ENCODE measurements at regions of chr16 and their contacts with region 1.

Region 1: DNA sequence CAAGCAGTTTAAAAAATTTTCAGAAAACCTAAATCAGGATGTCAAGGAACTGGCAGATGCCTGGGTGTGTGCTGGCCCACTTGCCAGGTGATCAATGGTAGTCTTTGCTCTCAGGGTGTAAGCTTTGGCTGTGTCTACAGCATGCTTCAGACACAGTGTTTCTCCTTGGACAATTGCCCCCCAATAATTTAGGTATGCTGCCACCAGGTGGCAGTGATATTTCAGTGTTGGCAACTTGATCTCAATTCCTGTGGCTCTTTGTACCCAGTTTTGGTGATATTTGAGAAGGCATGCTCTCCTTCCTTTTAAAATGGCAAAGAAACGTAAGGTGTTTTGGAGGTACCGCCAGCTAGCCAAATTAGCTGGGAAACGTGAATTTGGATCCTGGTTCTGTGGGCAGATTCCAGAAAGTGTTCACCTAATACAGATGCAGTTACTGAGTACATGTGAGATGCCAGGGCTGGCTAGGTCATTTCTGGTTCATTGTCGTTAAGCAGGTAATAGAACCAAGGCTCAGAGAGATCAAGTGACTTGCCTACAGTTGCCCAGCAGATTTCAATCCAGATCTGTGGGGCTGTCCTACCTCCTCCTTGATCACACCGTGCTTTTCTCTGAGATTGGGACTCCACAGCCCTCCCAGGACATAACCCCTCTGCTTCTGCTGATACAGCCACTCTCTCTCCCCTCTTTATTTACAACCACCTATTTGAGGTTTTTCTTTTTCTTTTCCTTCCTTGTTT is 155.6 kb upstream of the PLCG2 start:
- DNase-seq: peak; percentile 65 to 73
- ATAC-seq: peak; percentile 35 to 59; a peak in 3 of 6 replicates
- H3K4me3 ChIP-seq: no peak overlapping the region
- H3K27ac ChIP-seq: peak overlapping the region; percentile 70 to 76
- H3K4me1 ChIP-seq: peaks cover 41% of the 10 kb centered on the region
- CTCF ChIP-seq: peak; percentile 74
- EP300 ChIP-seq: no peak
- POLR2A ChIP-seq: no peak
- RAD21 ChIP-seq: peak; percentile 78 to 83

Region 2: GRCh38 chr16:81170824-81171223 is 452.7 kb before region 1 on chr16:
- CTCF ChIA-PET with region 1: no interaction called
- POLR2A ChIA-PET with region 1: no interaction called
- DNase-seq: no peak
- ATAC-seq: no peak
- H3K4me3 ChIP-seq: no peak overlapping the region
- H3K27ac ChIP-seq: no peak overlapping the region
- H3K4me1 ChIP-seq: peaks cover 20% of the 10 kb centered on the region
- CTCF ChIP-seq: no peak
- EP300 ChIP-seq: no peak
- POLR2A ChIP-seq: no peak
- RAD21 ChIP-seq: no peak

Region 3: DNA sequence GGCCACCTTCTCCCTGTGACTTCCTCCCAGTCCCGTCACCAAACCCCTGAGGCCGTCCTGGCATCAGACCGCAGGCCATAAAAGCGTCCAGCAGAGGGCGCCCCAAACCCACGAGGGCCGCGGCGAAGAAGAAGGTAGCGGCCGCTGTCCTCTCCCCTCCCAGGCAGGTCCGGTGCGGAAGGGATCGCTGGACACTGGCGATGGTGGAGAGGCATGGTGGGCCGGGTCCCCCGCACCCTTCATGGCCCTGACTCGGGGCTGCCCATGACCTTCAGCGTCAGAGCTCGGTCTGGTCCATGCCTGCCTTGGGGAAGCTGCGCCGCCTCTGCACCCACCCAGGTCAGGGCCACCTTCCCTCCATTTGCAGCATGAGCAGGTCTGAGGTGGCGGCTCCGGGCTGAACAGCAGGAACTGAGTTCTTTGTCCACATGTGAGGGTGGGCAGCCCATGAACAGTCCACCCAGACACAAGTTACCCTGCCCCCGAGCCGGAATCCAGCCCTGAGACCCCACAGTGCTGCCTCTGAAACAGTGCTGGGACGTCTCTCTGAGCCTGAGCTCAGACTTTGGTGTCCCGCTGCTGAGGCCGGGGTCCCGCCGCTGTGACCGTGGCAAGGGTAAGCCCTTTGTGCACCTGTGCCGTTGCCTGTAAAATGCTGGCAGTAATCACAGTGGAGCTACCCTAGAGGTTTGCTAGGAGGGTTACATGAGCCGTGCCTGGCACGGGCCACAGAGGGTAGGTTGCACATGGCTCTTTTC is 219.7 kb before region 1 on chr16:
- CTCF ChIA-PET with region 1: interaction called, 11 read pairs
- POLR2A ChIA-PET with region 1: no interaction called
- DNase-seq: peak; percentile 92
- ATAC-seq: peak; percentile 71 to 74
- H3K4me3 ChIP-seq: no peak overlapping the region
- H3K27ac ChIP-seq: peak overlapping the region; percentile 97 to 100
- H3K4me1 ChIP-seq: peaks cover 77% of the 10 kb centered on the region
- CTCF ChIP-seq: peak; percentile 89
- EP300 ChIP-seq: peak in 1 of 2 experiments; percentile 20; a peak in 1 of 5 replicates
- POLR2A ChIP-seq: no peak
- RAD21 ChIP-seq: peak; percentile 99

Region 4: DNA sequence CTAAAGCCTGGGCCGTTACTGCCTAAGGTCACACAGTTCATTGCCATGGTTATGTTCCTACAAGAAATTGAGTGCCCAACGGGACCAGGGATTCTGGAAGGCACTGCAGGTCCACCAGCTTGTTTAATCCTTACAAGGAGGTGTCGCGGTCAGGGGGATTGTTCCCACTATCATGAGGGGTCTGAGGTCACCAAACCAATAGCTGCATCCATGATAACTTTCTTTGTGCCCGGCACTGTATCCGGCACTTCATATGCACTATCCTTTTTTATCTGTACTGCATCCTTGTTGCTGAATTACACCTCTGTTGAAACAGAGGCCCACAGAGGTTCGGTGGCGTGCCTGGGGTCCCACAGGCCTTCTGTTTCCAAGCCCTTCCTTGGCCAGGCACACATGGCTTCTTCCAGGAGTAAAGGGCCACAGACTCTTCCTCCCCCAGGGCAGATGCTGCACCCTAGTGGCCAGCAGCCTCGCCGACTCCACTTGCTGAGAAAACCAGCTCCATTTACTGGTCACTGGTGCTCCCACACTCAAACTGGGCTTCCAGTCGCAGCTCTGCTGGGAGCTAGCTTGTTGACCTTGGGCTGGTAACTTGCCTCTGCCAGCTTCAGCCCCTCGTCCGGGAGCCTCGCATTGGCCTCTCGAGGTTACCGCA is 73.6 kb after region 1 on chr16:
- CTCF ChIA-PET with region 1: interaction called, 33 read pairs
- POLR2A ChIA-PET with region 1: no interaction called
- DNase-seq: peak; percentile 59 to 76
- ATAC-seq: peak; percentile 59 to 78; a peak in 5 of 6 replicates
- H3K4me3 ChIP-seq: no peak overlapping the region
- H3K27ac ChIP-seq: peak overlapping the region; percentile 10 to 75; a peak in 4 of 6 replicates
- H3K4me1 ChIP-seq: peaks cover 40% of the 10 kb centered on the region
- CTCF ChIP-seq: peak; percentile 66
- EP300 ChIP-seq: no peak
- POLR2A ChIP-seq: no peak
- RAD21 ChIP-seq: peak; percentile 70 to 73

Region 5: GRCh38 chr16:81723098-81723723 is 99.7 kb after region 1 on chr16:
- CTCF ChIA-PET with region 1: interaction called, 40 read pairs
- POLR2A ChIA-PET with region 1: no interaction called
- DNase-seq: peak; percentile 89 to 92
- ATAC-seq: peak; percentile 93 to 94
- H3K4me3 ChIP-seq: no peak overlapping the region
- H3K27ac ChIP-seq: peak overlapping the region; percentile 75 to 94
- H3K4me1 ChIP-seq: peaks cover 36% of the 10 kb centered on the region
- CTCF ChIP-seq: peak; percentile 90
- EP300 ChIP-seq: no peak
- POLR2A ChIP-seq: no peak
- RAD21 ChIP-seq: peak; percentile 94 to 96

Region 6: DNA sequence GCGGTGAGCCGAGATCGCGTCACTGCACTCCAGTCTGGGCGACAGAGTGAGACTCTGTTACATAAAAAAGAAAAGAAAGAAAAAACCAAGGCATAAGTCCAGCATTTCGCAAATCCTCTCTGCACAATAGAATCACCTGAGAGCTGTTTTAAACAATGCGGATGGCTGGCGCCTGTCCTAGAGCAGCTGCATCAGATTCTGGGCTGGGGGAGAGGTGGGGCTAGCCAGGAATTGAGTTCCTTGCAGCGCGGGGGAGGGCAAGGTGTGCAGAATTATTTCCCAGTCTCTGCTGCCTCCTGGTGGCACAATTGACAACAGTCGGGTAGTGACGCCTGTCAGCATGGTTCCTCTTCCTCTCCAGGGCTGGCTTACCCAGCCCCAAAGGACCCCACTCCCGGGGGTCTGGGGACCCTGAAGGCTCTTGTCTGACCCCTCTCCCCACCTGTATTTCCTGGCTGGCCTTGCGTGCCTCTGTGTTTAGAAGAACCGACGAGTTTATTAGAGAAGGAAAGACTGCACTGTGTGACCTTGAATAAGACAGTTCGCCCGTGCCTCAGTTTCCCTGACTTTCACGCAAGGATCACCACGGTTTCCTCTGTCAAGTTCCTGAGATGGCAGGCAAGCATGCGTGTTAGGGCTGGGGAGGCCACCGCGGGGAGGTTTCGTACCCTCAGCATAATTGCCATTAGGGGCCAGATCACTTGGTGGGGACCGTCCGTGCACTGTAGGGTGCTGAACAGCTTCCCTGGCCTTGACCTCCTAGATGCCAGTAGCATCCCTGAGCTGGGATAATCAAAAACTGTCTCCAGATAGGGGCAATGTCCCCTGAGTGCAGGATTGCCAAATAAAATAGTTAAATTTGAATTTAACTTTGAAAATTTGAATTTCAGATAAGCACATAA is 114.6 kb after region 1 on chr16:
- CTCF ChIA-PET with region 1: interaction called, 34 read pairs
- POLR2A ChIA-PET with region 1: no interaction called
- DNase-seq: peak; percentile 86 to 87
- ATAC-seq: peak; percentile 93 to 94
- H3K4me3 ChIP-seq: peak overlapping the region; percentile 32; the same call in 2 of the 3 replicates
- H3K27ac ChIP-seq: peak overlapping the region; percentile 65 to 78
- H3K4me1 ChIP-seq: peaks cover 13% of the 10 kb centered on the region
- CTCF ChIP-seq: peak; percentile 94
- EP300 ChIP-seq: no peak
- POLR2A ChIP-seq: no peak
- RAD21 ChIP-seq: peak; percentile 98

Measured in A549 (cell line).